ENCODE measurements at regions of chr10 and their contacts with region 1.

Region 1: GRCh38 chr10:131900350-131901146 is at the start of gene PPP2R2D:
- DNase-seq: peak; percentile 98
- ATAC-seq: peak; percentile 90
- H3K4me3 ChIP-seq: peak within 1 kb of the TSS; percentile 61 to 89 (median 69)
- H3K4me3 Mint-ChIP-seq: peak within 1 kb of the TSS; percentile 89
- H3K27ac ChIP-seq: peak within 1 kb of the TSS; percentile 71 to 85
- H3K27ac Mint-ChIP-seq: peak within 1 kb of the TSS; percentile 86
- H3K4me1 ChIP-seq: peaks cover 26 to 27% of the 10 kb centered on the region in 2 donors
- H3K4me1 Mint-ChIP-seq: peaks cover 35% of the 10 kb centered on the region
- H3K27me3 ChIP-seq: peaks cover 0 to 13% (median 5%) of the 10 kb centered on the region in 4 experiments
- H3K27me3 Mint-ChIP-seq: peaks cover 19% of the 10 kb centered on the region
- CTCF ChIP-seq: no peak
- total RNA-seq, gene PPP2R2D: 40.4 and 45.6 TPM in 2 replicates

Region 2: DNA sequence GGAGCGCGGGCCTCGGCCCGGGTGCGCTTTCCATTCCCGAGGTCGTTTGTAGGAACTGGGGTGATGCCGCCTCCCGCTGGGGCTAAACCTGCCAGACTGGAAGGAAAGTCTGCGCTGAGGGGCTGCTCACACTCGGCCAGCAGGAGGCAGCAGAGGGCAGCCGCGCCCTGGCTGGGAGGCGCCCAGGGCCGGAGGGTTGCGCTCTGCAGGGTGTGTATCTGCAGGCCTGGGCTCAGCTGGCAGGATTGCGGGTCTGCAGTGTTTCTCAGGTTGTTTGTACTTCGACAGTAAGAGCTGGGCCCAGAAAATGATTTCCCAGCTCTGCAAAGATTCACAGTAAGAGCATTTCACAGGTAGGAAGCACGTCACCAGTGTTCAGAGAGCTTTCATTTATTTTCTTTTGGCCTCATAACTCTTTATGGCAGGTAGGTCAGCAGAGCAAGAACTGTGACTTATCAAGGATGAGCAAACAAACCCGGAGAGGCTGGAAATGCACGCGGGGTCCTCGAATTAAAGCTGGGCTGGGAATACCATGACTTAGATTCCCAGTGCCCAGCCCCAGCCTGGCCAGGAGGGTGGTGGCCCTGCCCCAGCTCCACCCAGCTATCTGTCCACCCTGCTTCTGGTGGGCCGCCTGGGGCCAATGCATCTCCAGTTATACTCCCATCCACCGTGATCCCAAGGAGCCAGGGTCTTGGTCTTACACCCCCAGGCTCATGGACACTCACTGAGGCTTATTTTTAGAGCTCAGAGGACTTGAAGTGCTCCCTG is 15.0 kb before region 1 on chr10:
- CTCF ChIA-PET with region 1: interaction called, 12 read pairs
- POLR2A ChIA-PET with region 1: no interaction called
- intact Hi-C with region 1: no loop called
- DNase-seq: peak; percentile 80
- ATAC-seq: peak; percentile 99
- H3K4me3 ChIP-seq: no peak overlapping the region
- H3K4me3 Mint-ChIP-seq: no peak overlapping the region
- H3K27ac ChIP-seq: no peak overlapping the region
- H3K27ac Mint-ChIP-seq: no peak overlapping the region
- H3K4me1 ChIP-seq: peaks cover 3 to 7% of the 10 kb centered on the region in 2 donors
- H3K4me1 Mint-ChIP-seq: peaks cover 3% of the 10 kb centered on the region
- H3K27me3 ChIP-seq: peaks cover 0 to 28% (median 0%) of the 10 kb centered on the region in 4 experiments
- H3K27me3 Mint-ChIP-seq: peaks cover 12% of the 10 kb centered on the region
- CTCF ChIP-seq: peak; percentile 92

Region 3: DNA sequence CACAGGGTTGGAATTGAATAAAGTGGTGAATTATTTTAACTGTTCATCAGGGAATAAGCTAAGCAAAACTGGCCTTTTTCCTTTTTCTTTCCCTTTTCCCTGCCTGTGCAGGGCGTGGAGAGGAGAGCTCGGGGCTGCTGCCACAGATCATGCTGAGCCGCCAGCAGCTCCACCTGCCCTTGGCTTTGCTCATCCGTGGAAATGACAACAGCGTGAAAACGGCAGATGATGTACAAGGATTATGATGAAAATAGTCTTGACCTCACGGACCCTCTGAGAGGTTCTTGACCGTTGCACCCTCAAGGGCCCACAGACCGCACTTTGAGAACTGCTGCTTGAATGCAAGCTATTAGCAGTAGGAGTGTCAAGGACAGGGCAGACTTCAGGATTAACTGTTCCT is 10.9 kb after region 1 on chr10:
- CTCF ChIA-PET with region 1: no interaction called
- POLR2A ChIA-PET with region 1: no interaction called
- intact Hi-C with region 1: no loop called
- DNase-seq: no peak
- ATAC-seq: no peak
- H3K4me3 ChIP-seq: no peak overlapping the region
- H3K4me3 Mint-ChIP-seq: no peak overlapping the region
- H3K27ac ChIP-seq: no peak overlapping the region
- H3K27ac Mint-ChIP-seq: no peak overlapping the region
- H3K4me1 ChIP-seq: no peaks in the 10 kb centered on the region
- H3K4me1 Mint-ChIP-seq: peaks cover 36% of the 10 kb centered on the region
- H3K27me3 ChIP-seq: no peaks in the 10 kb centered on the region
- H3K27me3 Mint-ChIP-seq: no peaks in the 10 kb centered on the region
- CTCF ChIP-seq: no peak

Region 4: GRCh38 chr10:131981429-131982184 is 81.1 kb after region 1 on chr10 and contains the start of gene BNIP3:
- CTCF ChIA-PET with region 1: no interaction called
- POLR2A ChIA-PET with region 1: no interaction called
- intact Hi-C with region 1: loop called (anchors 1 kb)
- DNase-seq: peak; percentile 95
- ATAC-seq: peak; percentile 94
- H3K4me3 ChIP-seq: peak within 1 kb of the TSS; percentile 45 to 74 (median 66)
- H3K4me3 Mint-ChIP-seq: peak within 1 kb of the TSS; percentile 86
- H3K27ac ChIP-seq: peak within 1 kb of the TSS in 1 of 2 donors; percentile 29
- H3K27ac Mint-ChIP-seq: peak within 1 kb of the TSS; percentile 69
- H3K4me1 ChIP-seq: peaks cover 11 to 17% of the 10 kb centered on the region in 2 donors
- H3K4me1 Mint-ChIP-seq: peaks cover 17% of the 10 kb centered on the region
- H3K27me3 ChIP-seq: peaks cover 0 to 13% (median 0%) of the 10 kb centered on the region in 4 experiments
- H3K27me3 Mint-ChIP-seq: peaks cover 4% of the 10 kb centered on the region
- CTCF ChIP-seq: no peak
- total RNA-seq, gene BNIP3: 10.3 and 10.9 TPM in 2 replicates

Region 5: GRCh38 chr10:132331526-132332432 is 431.2 kb after region 1 on chr10 and contains the start of gene LRRC27:
- CTCF ChIA-PET with region 1: no interaction called
- POLR2A ChIA-PET with region 1: no interaction called
- intact Hi-C with region 1: loop called (anchors 1 kb)
- DNase-seq: peak; percentile 100
- ATAC-seq: peak; percentile 78
- H3K4me3 ChIP-seq: peak within 1 kb of the TSS; percentile 81 to 95 (median 90)
- H3K4me3 Mint-ChIP-seq: peak within 1 kb of the TSS; percentile 83
- H3K27ac ChIP-seq: peak within 1 kb of the TSS; percentile 93 to 96
- H3K27ac Mint-ChIP-seq: peak within 1 kb of the TSS; percentile 99
- H3K4me1 ChIP-seq: peaks cover 50 to 60% of the 10 kb centered on the region in 2 donors
- H3K4me1 Mint-ChIP-seq: peaks cover 75% of the 10 kb centered on the region
- H3K27me3 ChIP-seq: no peaks in the 10 kb centered on the region
- H3K27me3 Mint-ChIP-seq: no peaks in the 10 kb centered on the region
- CTCF ChIP-seq: no peak
- total RNA-seq, gene LRRC27: 23.6 and 32.2 TPM in 2 replicates